BJ (cell line): ENCODE measurements at regions of chr17 and their contacts with region 1.

Region 1: GRCh38 chr17:40168262-40168832 is 8.9 kb upstream of the RAPGEFL1 start:
- DNase-seq: no peak
- H3K4me3 ChIP-seq: no peak overlapping the region
- H3K27me3 ChIP-seq: no peaks in the 10 kb centered on the region
- CTCF ChIP-seq: peak; percentile 72

Region 2: DNA sequence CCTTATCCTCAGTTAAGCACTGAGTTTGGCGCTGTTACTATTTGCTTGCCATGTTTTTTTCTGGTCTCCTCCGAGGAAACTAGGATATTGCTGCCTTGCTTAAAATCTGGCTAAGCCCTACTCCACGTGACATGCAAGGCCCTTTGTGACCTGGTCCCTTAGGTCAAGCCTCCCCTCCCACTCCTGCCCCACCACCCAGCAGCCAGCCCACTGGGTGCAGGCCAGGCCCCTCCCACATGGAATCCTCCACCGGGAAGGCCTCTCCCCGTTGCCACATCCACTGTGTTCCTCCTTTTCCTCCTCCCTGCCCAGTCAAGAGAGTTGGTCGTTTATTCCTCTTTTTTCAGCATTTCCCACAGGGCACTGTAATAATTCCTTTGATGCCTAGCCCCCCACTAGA is 171.5 kb before region 1 on chr17:
- CTCF ChIA-PET with region 1: no interaction called
- POLR2A ChIA-PET with region 1: no interaction called
- DNase-seq: no peak
- H3K4me3 ChIP-seq: no peak overlapping the region
- H3K27me3 ChIP-seq: no peaks in the 10 kb centered on the region
- CTCF ChIP-seq: no peak

Region 3: DNA sequence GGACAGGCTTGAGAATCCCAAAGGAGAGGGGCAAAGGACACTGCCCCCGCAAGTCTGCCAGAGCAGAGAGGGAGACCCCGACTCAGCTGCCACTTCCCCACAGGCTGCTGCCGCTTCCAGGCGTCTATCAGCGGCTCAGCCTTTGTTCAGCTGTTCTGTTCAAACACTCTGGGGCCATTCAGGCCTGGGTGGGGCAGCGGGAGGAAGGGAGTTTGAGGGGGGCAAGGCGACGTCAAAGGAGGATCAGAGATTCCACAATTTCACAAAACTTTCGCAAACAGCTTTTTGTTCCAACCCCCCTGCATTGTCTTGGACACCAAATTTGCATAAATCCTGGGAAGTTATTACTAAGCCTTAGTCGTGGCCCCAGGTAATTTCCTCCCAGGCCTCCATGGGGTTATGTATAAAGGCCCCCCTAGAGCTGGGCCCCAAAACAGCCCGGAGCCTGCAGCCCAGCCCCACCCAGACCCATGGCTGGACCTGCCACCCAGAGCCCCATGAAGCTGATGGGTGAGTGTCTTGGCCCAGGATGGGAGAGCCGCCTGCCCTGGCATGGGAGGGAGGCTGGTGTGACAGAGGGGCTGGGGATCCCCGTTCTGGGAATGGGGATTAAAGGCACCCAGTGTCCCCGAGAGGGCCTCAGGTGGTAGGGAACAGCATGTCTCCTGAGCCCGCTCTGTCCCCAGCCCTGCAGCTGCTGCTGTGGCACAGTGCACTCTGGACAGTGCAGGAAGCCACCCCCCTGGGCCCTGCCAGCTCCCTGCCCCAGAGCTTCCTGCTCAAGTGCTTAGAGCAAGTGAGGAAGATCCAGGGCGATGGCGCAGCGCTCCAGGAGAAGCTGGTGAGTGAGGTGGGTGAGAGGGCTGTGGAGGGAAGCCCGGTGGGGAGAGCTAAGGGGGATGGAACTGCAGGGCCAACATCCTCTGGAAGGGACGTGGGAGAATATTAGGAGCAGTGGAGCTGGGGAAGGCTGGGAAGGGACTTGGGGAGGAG is 153.0 kb before region 1 on chr17 and contains the start of gene CSF3:
- CTCF ChIA-PET with region 1: interaction called, 11 read pairs
- POLR2A ChIA-PET with region 1: no interaction called
- DNase-seq: no peak
- H3K4me3 ChIP-seq: no peak within 1 kb of the TSS
- H3K27me3 ChIP-seq: no peaks in the 10 kb centered on the region
- CTCF ChIP-seq: no peak
- polyA plus RNA-seq, gene CSF3: not detected in 2 replicates

Region 4: GRCh38 chr17:40026816-40027613 is 141.3 kb before region 1 on chr17:
- CTCF ChIA-PET with region 1: interaction called, 13 read pairs
- POLR2A ChIA-PET with region 1: no interaction called
- DNase-seq: no peak
- H3K4me3 ChIP-seq: no peak overlapping the region
- H3K27me3 ChIP-seq: no peaks in the 10 kb centered on the region
- CTCF ChIP-seq: peak; percentile 89

Region 5: GRCh38 chr17:40139566-40140058 is 28.7 kb before region 1 on chr17:
- CTCF ChIA-PET with region 1: interaction called, 10 read pairs
- POLR2A ChIA-PET with region 1: no interaction called
- DNase-seq: no peak
- H3K4me3 ChIP-seq: peak overlapping the region; percentile 50
- H3K27me3 ChIP-seq: no peaks in the 10 kb centered on the region
- CTCF ChIP-seq: no peak

Region 6: GRCh38 chr17:40150276-40150675 is 18.1 kb before region 1 on chr17:
- CTCF ChIA-PET with region 1: interaction called, 10 read pairs
- POLR2A ChIA-PET with region 1: no interaction called
- DNase-seq: no peak
- H3K4me3 ChIP-seq: no peak overlapping the region
- H3K27me3 ChIP-seq: no peaks in the 10 kb centered on the region
- CTCF ChIP-seq: no peak

Region 7: DNA sequence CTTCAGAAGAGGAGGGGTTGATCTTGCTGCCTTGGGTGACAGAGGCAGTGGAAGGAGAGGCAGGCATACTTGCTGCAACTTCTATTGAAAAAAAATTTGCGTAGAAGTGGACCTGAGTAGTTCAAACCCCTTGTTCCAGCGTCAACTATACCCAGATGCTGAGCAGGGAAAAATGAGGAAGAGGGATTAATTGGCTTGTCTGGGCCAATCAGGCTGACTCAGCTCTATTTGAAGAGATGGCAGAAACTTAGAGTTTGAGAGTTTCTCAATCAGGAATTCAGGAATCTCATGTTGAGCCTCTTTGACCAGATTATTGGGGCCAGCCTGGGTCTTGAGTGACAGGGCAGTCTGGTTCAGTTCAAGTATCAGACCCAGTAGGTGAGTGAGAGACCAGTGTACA is 10.4 kb before region 1 on chr17:
- CTCF ChIA-PET with region 1: interaction called, 13 read pairs
- POLR2A ChIA-PET with region 1: no interaction called
- DNase-seq: no peak
- H3K4me3 ChIP-seq: no peak overlapping the region
- H3K27me3 ChIP-seq: no peaks in the 10 kb centered on the region
- CTCF ChIP-seq: no peak